Astrocyte of the cerebellum (primary cell): ENCODE measurements at regions of chr10 and their contacts with region 1.

Region 1: GRCh38 chr10:110563132-110563531 is 4.4 kb upstream of the SMC3 start:
- DNase-seq: no peak
- H3K4me3 ChIP-seq: no peak overlapping the region
- CTCF ChIP-seq: no peak

Region 2: GRCh38 chr10:110137142-110137545 is 426.0 kb before region 1 on chr10:
- in situ Hi-C with region 1: no loop called
- DNase-seq: peak; percentile 59
- H3K4me3 ChIP-seq: no peak overlapping the region
- CTCF ChIP-seq: peak; percentile 58

Region 3: GRCh38 chr10:110512461-110513187 is 50.5 kb before region 1 on chr10:
- in situ Hi-C with region 1: no loop called
- DNase-seq: peak; percentile 71
- H3K4me3 ChIP-seq: no peak overlapping the region
- CTCF ChIP-seq: no peak

Region 4: DNA sequence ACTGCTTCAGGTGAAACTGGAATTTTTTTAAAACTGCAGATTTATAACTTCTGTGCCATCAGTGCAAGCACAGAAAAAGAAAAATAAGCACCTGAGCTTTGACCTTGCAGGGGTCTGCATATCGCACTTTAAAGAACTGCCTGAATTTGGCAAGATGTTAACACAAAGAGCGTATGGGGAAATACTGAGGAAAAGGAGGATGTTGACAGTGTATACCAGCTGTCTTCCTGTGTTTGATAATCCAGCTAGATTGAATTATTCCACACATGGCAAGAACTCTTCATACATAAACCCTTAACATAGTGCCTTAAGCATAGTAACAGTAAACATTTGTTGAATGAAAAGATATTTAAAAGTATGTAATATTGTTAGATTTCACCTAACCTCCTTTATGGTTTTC is 34.3 kb after region 1 on chr10:
- in situ Hi-C with region 1: loop called (anchors 5 kb)
- DNase-seq: no peak
- H3K4me3 ChIP-seq: no peak overlapping the region
- CTCF ChIP-seq: no peak